Thyroid gland (tissue), 4 donors: ENCODE measurements at regions of chr10 and their contacts with region 1.

Region 1: DNA sequence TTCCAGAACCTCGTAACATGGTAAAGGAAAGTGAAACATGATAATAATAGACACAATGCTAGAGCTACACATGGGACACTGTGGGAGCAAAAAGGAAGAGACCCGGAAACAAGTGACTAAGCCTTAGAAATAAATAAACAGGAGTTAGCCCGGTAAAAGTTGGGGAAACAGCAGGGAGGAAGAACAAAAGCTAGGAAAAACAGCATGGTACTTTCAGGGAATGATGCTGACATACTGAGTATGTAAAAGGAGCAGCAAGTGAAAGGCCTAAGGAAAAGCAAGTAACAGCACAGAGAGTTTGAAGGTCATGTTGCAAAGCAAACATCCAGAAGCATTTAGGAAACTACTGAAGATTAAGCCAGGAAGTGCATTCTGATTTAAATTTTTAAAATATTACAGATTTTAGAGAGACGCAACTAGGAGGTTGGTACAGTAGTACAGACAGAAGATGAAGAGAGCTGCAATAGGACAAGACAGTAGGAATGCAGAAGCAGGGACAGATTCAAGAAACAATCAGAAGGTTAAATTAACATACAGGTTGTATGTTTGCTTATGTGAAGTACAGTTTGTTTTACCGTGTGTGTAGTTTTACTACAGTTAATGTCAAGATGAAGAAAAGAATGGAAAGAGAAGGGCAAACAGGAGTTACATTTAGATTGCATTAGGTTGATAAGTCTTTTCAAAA is 63.7 kb downstream of the ARHGAP12 start:
- DNase-seq: no peak
- H3K4me3 ChIP-seq: no peak overlapping the region
- H3K27ac ChIP-seq: peak overlapping the region in 1 of 3 donors; percentile 21
- H3K4me1 ChIP-seq: peaks cover 0 to 8% of the 10 kb centered on the region in 2 donors
- H3K27me3 ChIP-seq: no peaks in the 10 kb centered on the region
- CTCF ChIP-seq: no peak
- POLR2A ChIP-seq: no peak

Region 2: GRCh38 chr10:31928549-31929260 is 63.7 kb after region 1 on chr10 and contains the start of gene ARHGAP12:
- intact Hi-C with region 1: loop called (anchors 5 kb)
- DNase-seq: peak; percentile 90 to 91
- H3K4me3 ChIP-seq: peak within 1 kb of the TSS; percentile 63 to 92 (median 90)
- H3K27ac ChIP-seq: peak within 1 kb of the TSS; percentile 89 to 98 (median 97)
- H3K4me1 ChIP-seq: peaks cover 18% of the 10 kb centered on the region in 2 donors
- H3K27me3 ChIP-seq: no peaks in the 10 kb centered on the region
- CTCF ChIP-seq: peak in 1 of 6 experiments; percentile 30
- POLR2A ChIP-seq: peak; percentile 88 to 97
- total RNA-seq, gene ARHGAP12: 49.9 to 67.6 (median 60.8) TPM

Region 3: DNA sequence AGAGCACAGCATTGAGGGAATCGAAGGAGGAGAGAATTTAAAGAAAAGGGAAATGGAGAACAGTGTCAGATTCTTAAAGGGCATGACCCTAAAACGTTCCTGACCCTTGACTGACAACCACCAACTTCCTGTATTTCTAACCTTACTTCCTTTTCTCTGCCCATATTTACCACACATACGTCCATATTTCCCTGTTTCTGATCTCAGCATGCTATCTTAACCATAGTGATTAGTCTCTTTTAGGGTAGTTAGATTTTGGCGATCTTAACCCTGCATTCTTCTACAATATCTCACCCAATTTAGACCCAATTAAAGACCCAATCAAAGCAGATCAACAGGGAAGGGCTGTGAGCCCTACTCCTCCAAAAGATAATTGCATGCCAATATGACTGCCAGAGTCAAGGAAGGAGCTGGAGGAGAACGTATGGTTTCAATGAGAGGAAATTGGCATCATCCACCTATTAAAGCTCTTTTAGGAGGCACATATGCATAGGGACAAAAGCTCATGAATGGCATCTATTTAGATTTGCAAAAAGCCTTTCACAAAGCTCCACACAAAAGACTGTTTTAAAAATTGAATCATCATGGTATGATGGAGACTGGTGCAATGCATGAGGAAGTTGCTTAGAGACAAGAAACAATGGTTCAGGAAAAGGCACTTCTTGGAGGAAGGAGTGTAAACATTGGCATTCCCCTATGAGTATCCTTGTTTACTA is 112.6 kb after region 1 on chr10:
- intact Hi-C with region 1: no loop called
- DNase-seq: no peak
- H3K4me3 ChIP-seq: no peak overlapping the region
- H3K27ac ChIP-seq: no peak overlapping the region
- H3K4me1 ChIP-seq: peaks cover 0 to 4% of the 10 kb centered on the region in 2 donors
- H3K27me3 ChIP-seq: no peaks in the 10 kb centered on the region
- CTCF ChIP-seq: no peak
- POLR2A ChIP-seq: no peak